CD8-positive, alpha-beta memory T cell (primary cell): ENCODE measurements at regions of chr21 and their contacts with region 1.

Region 1: DNA sequence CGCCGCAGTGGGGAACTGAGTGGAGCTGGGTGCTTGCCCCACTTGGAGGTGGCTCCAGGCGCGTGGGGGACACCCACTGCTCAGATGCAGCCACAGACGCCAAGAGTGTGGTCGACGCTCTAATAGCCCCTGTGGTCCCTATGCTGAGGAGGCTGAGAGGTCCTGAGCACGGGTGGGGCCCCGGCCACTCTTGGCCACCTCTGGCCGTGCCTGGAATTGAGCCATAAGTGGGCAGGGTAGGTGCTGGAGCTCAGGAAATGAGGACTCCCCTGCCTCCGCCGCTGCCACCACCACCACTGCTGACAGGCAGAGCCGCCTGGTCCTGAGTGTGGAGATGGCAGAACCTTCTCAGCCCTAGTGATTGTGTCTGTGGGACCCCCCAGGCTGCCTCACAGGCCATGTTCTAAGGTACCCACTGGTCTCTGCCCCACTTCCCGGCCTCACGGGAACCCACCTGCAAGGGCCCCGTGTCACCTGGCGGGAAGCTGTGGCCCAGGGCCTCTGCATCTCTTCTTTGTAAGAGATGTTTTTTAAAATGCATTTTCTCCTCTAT is 34.6 kb upstream of the DIP2A start:
- DNase-seq: peak; percentile 26 to 69 (median 67)
- H3K4me3 ChIP-seq: peak overlapping the region; percentile 37
- H3K4me3 Mint-ChIP-seq: peak overlapping the region; percentile 51 to 91 (median 86)
- H3K27ac ChIP-seq: peak overlapping the region; percentile 95
- H3K27ac Mint-ChIP-seq: peak overlapping the region; percentile 93 to 100 (median 99)
- H3K4me1 ChIP-seq: peaks cover 37% of the 10 kb centered on the region
- H3K4me1 Mint-ChIP-seq: peaks cover 22 to 49% (median 30%) of the 10 kb centered on the region in 3 donors
- H3K27me3 ChIP-seq: no peaks in the 10 kb centered on the region
- H3K27me3 Mint-ChIP-seq: peaks cover 0 to 1% of the 10 kb centered on the region in 2 donors

Region 2: DNA sequence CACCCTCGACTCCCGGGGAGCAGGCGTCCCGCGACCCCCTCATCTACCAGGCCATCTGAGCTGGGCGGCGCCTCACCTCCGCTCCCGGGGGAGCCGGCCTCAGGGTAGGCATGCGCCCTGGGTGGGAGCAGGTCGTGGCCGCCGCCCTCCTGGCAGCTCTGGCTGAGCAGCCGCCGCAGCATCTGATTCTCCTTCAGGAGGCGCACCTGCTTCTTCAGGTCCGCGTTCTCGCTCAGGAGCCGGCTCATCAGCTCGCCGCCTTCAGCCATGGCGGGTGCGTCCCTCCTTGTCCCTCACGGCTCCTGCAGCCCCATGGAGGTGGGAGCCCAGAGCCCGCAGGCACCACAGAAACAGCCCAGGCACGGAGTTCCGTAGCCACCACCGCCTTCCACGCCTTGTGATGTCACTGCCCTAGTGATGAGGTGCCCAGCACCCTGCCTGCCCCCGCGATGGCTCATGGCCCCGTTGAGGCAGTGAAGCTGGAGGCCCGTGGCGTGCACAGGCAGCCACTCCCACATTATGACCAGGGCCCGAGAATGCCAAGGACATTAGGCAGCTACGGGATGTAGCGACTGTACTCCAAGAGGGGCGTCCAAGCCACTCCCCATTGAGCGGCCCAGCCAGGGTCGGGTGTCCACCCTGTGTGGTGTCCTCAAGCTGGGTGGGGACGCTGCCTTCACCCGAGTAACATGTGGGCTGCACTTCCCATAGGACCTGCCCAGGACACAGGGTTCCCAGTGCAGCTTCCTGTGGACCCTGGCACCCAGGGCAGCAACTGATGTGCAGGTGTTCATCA is 241.4 kb before region 1 on chr21:
- CTCF ChIA-PET with region 1: no interaction called
- POLR2A ChIA-PET with region 1: no interaction called
- DNase-seq: no peak
- H3K4me3 ChIP-seq: no peak overlapping the region
- H3K4me3 Mint-ChIP-seq: peak overlapping the region in 3 of 7 donors; percentile 28 to 70 (median 46)
- H3K27ac ChIP-seq: peak overlapping the region; percentile 4
- H3K27ac Mint-ChIP-seq: peak overlapping the region in 2 of 8 donors; percentile 43 to 91
- H3K4me1 ChIP-seq: peaks cover 15% of the 10 kb centered on the region
- H3K4me1 Mint-ChIP-seq: peaks cover 0 to 17% (median 9%) of the 10 kb centered on the region in 3 donors
- H3K27me3 ChIP-seq: peaks cover 6% of the 10 kb centered on the region
- H3K27me3 Mint-ChIP-seq: peaks cover 1 to 16% of the 10 kb centered on the region in 2 donors

Region 3: DNA sequence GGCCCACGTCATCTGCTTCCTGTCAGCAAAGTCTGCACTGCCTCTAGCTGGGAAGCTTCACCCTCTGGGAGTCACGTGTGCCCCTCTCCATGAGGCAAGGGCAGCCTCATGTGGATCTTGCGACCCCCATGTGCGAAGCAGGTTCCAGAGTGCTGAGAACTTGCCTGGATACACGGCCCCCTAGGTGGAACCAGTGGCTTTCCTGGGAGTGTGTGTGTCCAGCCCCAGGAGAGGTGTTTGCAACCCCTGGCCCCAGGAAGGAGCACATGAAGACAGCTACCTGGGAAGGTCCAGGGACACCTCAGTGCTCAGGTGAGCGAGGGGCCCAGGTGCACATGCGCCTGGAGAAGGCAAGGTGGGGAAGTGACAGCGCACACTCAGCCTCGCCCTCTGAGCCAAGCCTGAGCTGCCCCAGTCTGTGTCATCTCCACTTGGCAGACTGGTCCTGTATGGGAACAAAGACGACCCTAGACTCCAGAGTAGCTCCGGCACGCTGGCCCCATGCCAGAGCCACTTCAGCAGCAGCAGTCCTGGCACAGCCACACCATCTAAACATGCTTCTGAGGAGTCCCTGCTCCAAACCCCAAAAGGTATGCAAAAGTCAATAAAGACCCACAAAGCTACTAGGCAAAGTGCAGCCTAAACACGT is 204.4 kb before region 1 on chr21:
- CTCF ChIA-PET with region 1: no interaction called
- POLR2A ChIA-PET with region 1: no interaction called
- DNase-seq: no peak
- H3K4me3 ChIP-seq: no peak overlapping the region
- H3K4me3 Mint-ChIP-seq: no peak overlapping the region
- H3K27ac ChIP-seq: no peak overlapping the region
- H3K27ac Mint-ChIP-seq: peak overlapping the region in 1 of 8 donors; percentile 63
- H3K4me1 ChIP-seq: no peaks in the 10 kb centered on the region
- H3K4me1 Mint-ChIP-seq: peaks cover 0 to 8% (median 0%) of the 10 kb centered on the region in 3 donors
- H3K27me3 ChIP-seq: no peaks in the 10 kb centered on the region
- H3K27me3 Mint-ChIP-seq: no peaks in the 10 kb centered on the region

Region 4: GRCh38 chr21:46375560-46376230 is 48.4 kb before region 1 on chr21:
- CTCF ChIA-PET with region 1: no interaction called
- POLR2A ChIA-PET with region 1: no interaction called
- DNase-seq: no peak
- H3K4me3 ChIP-seq: no peak overlapping the region
- H3K4me3 Mint-ChIP-seq: no peak overlapping the region
- H3K27ac ChIP-seq: no peak overlapping the region
- H3K27ac Mint-ChIP-seq: peak overlapping the region in 1 of 8 donors; percentile 68
- H3K4me1 ChIP-seq: no peaks in the 10 kb centered on the region
- H3K4me1 Mint-ChIP-seq: peaks cover 9 to 18% (median 12%) of the 10 kb centered on the region in 3 donors
- H3K27me3 ChIP-seq: no peaks in the 10 kb centered on the region
- H3K27me3 Mint-ChIP-seq: no peaks in the 10 kb centered on the region

Region 5: GRCh38 chr21:46434322-46434958 is 10.3 kb after region 1 on chr21:
- CTCF ChIA-PET with region 1: interaction called, 10 read pairs
- POLR2A ChIA-PET with region 1: interaction called, 4 read pairs
- DNase-seq: no peak
- H3K4me3 ChIP-seq: no peak overlapping the region
- H3K4me3 Mint-ChIP-seq: peak overlapping the region in 2 of 7 donors; percentile 8 to 54
- H3K27ac ChIP-seq: no peak overlapping the region
- H3K27ac Mint-ChIP-seq: peak overlapping the region in 5 of 8 donors; percentile 21 to 83 (median 43)
- H3K4me1 ChIP-seq: no peaks in the 10 kb centered on the region
- H3K4me1 Mint-ChIP-seq: peaks cover 18 to 28% (median 20%) of the 10 kb centered on the region in 3 donors
- H3K27me3 ChIP-seq: no peaks in the 10 kb centered on the region
- H3K27me3 Mint-ChIP-seq: peaks cover 0 to 3% of the 10 kb centered on the region in 2 donors

Region 6: GRCh38 chr21:46458315-46459023 is 34.4 kb after region 1 on chr21 and contains the start of gene DIP2A:
- CTCF ChIA-PET with region 1: no interaction called
- POLR2A ChIA-PET with region 1: interaction called, 12 read pairs
- DNase-seq: peak; percentile 91 to 97 (median 96)
- H3K4me3 ChIP-seq: peak within 1 kb of the TSS; percentile 94
- H3K4me3 Mint-ChIP-seq: peak within 1 kb of the TSS; percentile 87 to 100 (median 95)
- H3K27ac ChIP-seq: peak within 1 kb of the TSS; percentile 95
- H3K27ac Mint-ChIP-seq: peak within 1 kb of the TSS; percentile 92 to 99 (median 96)
- H3K4me1 ChIP-seq: peaks cover 46% of the 10 kb centered on the region
- H3K4me1 Mint-ChIP-seq: peaks cover 51 to 71% (median 55%) of the 10 kb centered on the region in 3 donors
- H3K27me3 ChIP-seq: no peaks in the 10 kb centered on the region
- H3K27me3 Mint-ChIP-seq: no peaks in the 10 kb centered on the region
- total RNA-seq, gene DIP2A: 29.7 to 29.9 TPM